Tibial artery (tissue), 4 donors: ENCODE measurements at regions of chr3 and their contacts with region 1.

Region 1: DNA sequence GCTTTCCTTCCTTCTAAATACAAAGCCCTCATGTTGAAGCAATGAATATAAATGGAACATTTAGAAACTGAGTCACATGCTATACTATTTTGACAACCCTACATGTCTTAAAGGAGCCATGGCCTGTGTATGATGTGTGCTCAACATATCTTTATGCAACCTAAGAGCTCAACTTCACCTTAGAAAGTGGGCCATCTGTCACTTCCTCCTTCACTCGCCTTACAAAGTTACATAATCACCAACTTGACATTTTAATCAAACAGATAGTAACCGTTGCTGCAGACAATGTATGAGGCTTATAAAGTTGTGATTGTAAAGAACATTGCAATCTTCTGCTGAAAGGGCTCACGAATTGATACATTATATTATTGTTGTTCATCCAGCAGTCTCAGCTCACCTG is 163.6 kb downstream of the SERPINI1 start:
- DNase-seq: no peak
- H3K4me3 ChIP-seq: no peak overlapping the region
- H3K27ac ChIP-seq: no peak overlapping the region
- H3K4me1 ChIP-seq: no peaks in the 10 kb centered on the region
- H3K27me3 ChIP-seq: no peaks in the 10 kb centered on the region
- CTCF ChIP-seq: no peak

Region 2: GRCh38 chr3:167380004-167380689 is 518.9 kb before region 1 on chr3 and contains the start of gene ZBBX:
- intact Hi-C with region 1: loop called (anchors 10 kb)
- DNase-seq: peak; percentile 78 to 83
- H3K4me3 ChIP-seq: peak within 1 kb of the TSS; percentile 30 to 35
- H3K27ac ChIP-seq: no peak within 1 kb of the TSS
- H3K4me1 ChIP-seq: peaks cover 0 to 7% (median 0%) of the 10 kb centered on the region in 4 donors
- H3K27me3 ChIP-seq: no peaks in the 10 kb centered on the region
- CTCF ChIP-seq: peak; percentile 66 to 70